ENCODE measurements at regions of chr16 and their contacts with region 1.

Region 1: GRCh38 chr16:50354629-50355456 is 13.9 kb downstream of the BRD7 start:
- DNase-seq: no peak
- H3K4me3 Mint-ChIP-seq: no peak overlapping the region
- H3K27ac Mint-ChIP-seq: peak overlapping the region; percentile 60
- H3K4me1 Mint-ChIP-seq: peaks cover 22% of the 10 kb centered on the region
- H3K27me3 Mint-ChIP-seq: no peaks in the 10 kb centered on the region

Region 2: DNA sequence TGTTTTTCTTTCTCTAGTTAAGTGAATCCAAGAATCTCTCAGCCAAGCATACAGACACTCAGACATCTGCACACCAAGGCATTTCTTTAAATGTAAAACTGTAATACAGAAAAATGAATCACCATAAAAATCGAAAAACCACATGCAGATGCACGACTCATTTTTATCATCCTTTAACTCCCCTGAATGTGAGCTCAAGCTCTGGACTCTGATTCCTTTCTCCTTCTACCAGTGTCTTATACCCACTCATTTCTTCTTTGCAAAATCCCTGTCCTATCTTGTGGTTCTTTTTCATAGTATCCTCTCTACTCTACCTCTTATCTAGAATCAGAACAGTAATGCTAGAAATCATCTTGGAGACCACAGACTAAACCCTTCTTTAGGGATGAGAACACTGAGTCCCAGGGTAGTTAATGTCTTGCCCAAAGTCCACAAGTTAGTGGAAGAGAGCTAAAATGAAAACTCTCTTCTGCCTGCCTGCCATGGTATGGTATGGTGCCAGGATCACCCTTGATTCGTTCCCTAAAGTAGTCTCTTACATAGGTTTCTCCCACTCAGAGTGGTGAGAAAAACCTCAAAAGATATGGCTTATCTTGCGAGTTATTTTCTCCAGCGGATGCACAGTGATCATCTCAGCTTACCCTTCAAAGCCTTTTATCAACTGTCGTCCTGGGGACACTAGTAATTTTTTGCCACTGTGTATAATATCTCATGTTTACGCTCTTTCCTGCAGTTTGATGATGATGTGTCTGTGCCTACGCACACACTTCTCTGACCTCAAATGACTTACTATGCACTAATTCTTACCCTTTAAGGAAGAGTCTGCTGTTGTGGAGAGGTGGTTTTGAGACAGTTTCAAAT is 16.2 kb before region 1 on chr16:
- CTCF ChIA-PET with region 1: interaction called, 28 read pairs
- DNase-seq: peak; percentile 43
- H3K4me3 Mint-ChIP-seq: peak overlapping the region; percentile 60
- H3K27ac Mint-ChIP-seq: peak overlapping the region; percentile 98
- H3K4me1 Mint-ChIP-seq: peaks cover 72% of the 10 kb centered on the region
- H3K27me3 Mint-ChIP-seq: no peaks in the 10 kb centered on the region

Measured in activated naive CD4-positive, alpha-beta T cell treated with anti-CD3 and anti-CD28 coated beads, Interleukin-2, amount 10 ng/mL, durations not matched to agents 7 days and 5 days (primary cell).